ENCODE measurements at regions of chr17 and their contacts with region 1.

Region 1: DNA sequence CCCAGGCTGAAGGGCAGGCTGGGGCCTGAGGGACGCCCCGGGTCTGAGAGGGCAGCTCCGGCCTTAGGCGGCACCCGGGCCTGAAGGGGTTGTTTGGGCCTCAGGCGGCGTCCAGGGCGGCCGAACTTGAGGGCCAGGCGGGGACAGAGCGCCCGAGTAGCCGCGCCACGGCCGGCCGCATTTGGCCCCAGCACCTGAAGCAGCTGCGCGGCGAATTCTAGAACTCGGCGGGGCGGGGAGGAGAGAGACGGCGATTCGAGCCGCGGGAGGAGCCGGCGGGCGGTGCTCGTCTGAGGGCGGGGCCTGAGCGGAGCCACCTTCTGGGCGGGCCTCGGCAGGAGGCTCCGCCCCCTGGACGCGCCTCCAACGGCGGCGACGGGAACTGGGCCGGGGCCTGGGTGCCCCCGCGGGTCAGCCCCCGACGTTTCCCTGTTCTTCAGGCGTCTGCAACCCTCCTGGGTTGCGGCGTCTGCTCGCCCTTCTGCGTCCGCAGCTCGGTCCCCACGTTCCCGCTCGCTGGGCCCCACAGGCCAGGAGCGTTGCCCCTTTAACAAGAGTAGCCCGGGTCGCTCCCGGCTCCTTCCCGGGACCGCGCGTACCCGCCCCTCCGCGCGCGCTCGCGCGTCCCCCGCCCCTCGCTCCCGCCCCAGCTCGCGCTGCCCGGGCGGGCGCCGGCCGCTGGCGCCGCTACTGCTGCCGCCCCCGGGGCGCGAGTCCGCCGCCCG is at the starts of genes INCA1 and KIF1C:
- DNase-seq: peak; percentile 78 to 95 (median 90)
- ATAC-seq: peak; percentile 97
- H3K4me3 ChIP-seq: peak within 1 kb of the TSS; percentile 59 to 89
- H3K4me3 Mint-ChIP-seq: peak within 1 kb of the TSS; percentile 83
- H3K27ac ChIP-seq: peak within 1 kb of the TSS; percentile 56
- H3K27ac Mint-ChIP-seq: peak within 1 kb of the TSS; percentile 84
- H3K4me1 ChIP-seq: peaks cover 20% of the 10 kb centered on the region
- H3K4me1 Mint-ChIP-seq: peaks cover 23% of the 10 kb centered on the region
- H3K27me3 ChIP-seq: no peaks in the 10 kb centered on the region
- H3K27me3 Mint-ChIP-seq: no peaks in the 10 kb centered on the region
- CTCF ChIP-seq: no peak
- total RNA-seq, gene INCA1: 0.24 TPM in 1 of 2 experiments, not detected in the other
- total RNA-seq, gene KIF1C: 7.1 to 7.2 TPM

Region 2: DNA sequence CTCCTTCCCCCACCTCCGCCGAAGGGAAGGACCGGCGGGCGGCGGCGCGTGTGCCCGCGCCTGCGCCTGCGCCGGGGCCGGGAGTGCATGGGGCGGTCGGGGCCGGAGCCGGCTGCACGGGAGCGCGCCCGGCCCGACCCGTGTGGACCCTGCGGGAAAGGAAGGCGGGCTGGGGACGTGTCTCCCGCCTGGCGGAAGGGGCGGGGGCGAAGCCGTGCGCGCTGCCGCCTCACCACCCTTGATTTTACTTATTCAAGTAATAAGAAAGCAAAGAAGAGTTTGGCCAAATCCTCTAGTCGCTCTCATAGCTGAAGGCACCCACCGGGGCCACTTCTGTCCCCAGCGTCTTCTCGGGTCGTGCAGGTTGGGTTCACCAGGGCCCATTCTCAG is 48.5 kb before region 1 on chr17:
- CTCF ChIA-PET with region 1: no interaction called
- POLR2A ChIA-PET with region 1: no interaction called
- intact Hi-C with region 1: loop called in 1 of 2 experiments (anchors 1 kb)
- DNase-seq: peak; percentile 44 to 90 (median 70)
- ATAC-seq: peak; percentile 26
- H3K4me3 ChIP-seq: peak overlapping the region; percentile 99 to 100
- H3K4me3 Mint-ChIP-seq: peak overlapping the region; percentile 94
- H3K27ac ChIP-seq: peak overlapping the region; percentile 72 to 81
- H3K27ac Mint-ChIP-seq: peak overlapping the region; percentile 93
- H3K4me1 ChIP-seq: peaks cover 38% of the 10 kb centered on the region
- H3K4me1 Mint-ChIP-seq: peaks cover 45% of the 10 kb centered on the region
- H3K27me3 ChIP-seq: no peaks in the 10 kb centered on the region
- H3K27me3 Mint-ChIP-seq: no peaks in the 10 kb centered on the region
- CTCF ChIP-seq: no peak

Region 3: DNA sequence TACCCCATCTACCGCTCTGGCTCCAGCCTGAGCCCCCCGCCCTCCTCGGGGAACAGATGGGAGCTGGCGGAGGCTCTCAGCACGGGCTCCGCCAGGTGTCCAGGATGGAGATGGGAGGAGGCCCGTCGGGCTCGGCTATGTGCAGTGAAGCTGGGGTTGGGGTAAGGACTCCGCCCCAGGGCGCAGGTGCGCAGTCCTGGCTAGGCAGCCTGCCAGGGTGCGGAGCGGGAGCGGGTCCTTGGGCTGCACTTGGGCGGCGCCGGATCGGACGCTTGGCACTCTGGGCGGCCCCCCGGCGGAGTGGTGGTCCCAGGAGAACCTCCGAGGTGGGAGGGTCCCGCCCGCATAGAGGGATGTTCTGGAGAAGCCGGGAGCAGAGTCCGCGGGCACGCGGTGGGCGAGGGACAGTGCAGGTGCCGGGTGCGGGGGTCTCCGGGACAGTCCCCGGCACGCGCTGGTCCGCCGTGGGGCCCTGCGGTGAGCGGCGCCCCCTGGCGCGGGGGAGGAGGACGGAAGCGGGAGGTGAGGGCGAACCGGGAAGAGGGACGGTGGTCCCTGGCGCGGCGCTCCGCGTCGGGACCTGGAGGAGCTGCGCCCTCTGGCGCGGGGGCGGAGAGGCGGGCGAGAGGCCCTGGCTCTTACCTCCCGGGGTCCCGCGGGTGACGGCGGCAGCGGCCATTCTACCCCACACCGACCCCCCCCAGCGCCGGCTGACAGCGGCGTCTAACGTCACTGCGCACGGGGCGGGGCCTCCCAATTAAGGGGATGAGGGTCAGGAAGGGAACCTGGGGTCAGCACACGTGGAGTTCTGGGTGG is 10.3 kb before region 1 on chr17 and contains the start of gene CAMTA2:
- CTCF ChIA-PET with region 1: interaction called, 5 read pairs
- POLR2A ChIA-PET with region 1: interaction called, 22 read pairs
- intact Hi-C with region 1: loop called (anchors 1 kb)
- DNase-seq: peak; percentile 69 to 92 (median 91)
- ATAC-seq: peak; percentile 91
- H3K4me3 ChIP-seq: peak within 1 kb of the TSS; percentile 98 to 100
- H3K4me3 Mint-ChIP-seq: peak within 1 kb of the TSS; percentile 91
- H3K27ac ChIP-seq: peak within 1 kb of the TSS; percentile 80 to 98
- H3K27ac Mint-ChIP-seq: peak within 1 kb of the TSS; percentile 95
- H3K4me1 ChIP-seq: peaks cover 27% of the 10 kb centered on the region
- H3K4me1 Mint-ChIP-seq: peaks cover 38% of the 10 kb centered on the region
- H3K27me3 ChIP-seq: no peaks in the 10 kb centered on the region
- H3K27me3 Mint-ChIP-seq: no peaks in the 10 kb centered on the region
- CTCF ChIP-seq: peak; percentile 76
- total RNA-seq, gene CAMTA2: 40.1 to 42.3 TPM

Region 4: GRCh38 chr17:5031365-5032082 is 34.1 kb after region 1 on chr17:
- CTCF ChIA-PET with region 1: no interaction called
- POLR2A ChIA-PET with region 1: interaction called, 5 read pairs
- intact Hi-C with region 1: loop called in 1 of 2 experiments (anchors 5 kb)
- DNase-seq: peak; percentile 71 to 91 (median 85)
- ATAC-seq: peak; percentile 87
- H3K4me3 ChIP-seq: peak overlapping the region; percentile 30 to 55
- H3K4me3 Mint-ChIP-seq: peak overlapping the region; percentile 83
- H3K27ac ChIP-seq: peak overlapping the region; percentile 26 to 67
- H3K27ac Mint-ChIP-seq: peak overlapping the region; percentile 84
- H3K4me1 ChIP-seq: peaks cover 13% of the 10 kb centered on the region
- H3K4me1 Mint-ChIP-seq: peaks cover 14% of the 10 kb centered on the region
- H3K27me3 ChIP-seq: no peaks in the 10 kb centered on the region
- H3K27me3 Mint-ChIP-seq: peaks cover 2% of the 10 kb centered on the region
- CTCF ChIP-seq: peak; percentile 71